Lower lobe of right lung (tissue), 2 donors: ENCODE measurements at regions of chr19 and their contacts with region 1.

Region 1: GRCh38 chr19:10644260-10645007 is 9.7 kb upstream of the ILF3 start:
- DNase-seq: peak; percentile 88
- ATAC-seq: peak; percentile 91 to 93
- H3K4me3 ChIP-seq: no peak overlapping the region
- H3K27ac ChIP-seq: peak overlapping the region; percentile 41
- H3K4me1 ChIP-seq: peaks cover 34% of the 10 kb centered on the region
- H3K27me3 ChIP-seq: no peaks in the 10 kb centered on the region
- CTCF ChIP-seq: peak; percentile 89

Region 2: GRCh38 chr19:10580979-10581631 is 63.3 kb before region 1 on chr19:
- intact Hi-C with region 1: loop called (anchors 10 kb)
- DNase-seq: peak; percentile 91
- ATAC-seq: peak; percentile 92 to 93
- H3K4me3 ChIP-seq: no peak overlapping the region
- H3K27ac ChIP-seq: no peak overlapping the region
- H3K4me1 ChIP-seq: peaks cover 4% of the 10 kb centered on the region
- H3K27me3 ChIP-seq: no peaks in the 10 kb centered on the region
- CTCF ChIP-seq: peak; percentile 97

Region 3: DNA sequence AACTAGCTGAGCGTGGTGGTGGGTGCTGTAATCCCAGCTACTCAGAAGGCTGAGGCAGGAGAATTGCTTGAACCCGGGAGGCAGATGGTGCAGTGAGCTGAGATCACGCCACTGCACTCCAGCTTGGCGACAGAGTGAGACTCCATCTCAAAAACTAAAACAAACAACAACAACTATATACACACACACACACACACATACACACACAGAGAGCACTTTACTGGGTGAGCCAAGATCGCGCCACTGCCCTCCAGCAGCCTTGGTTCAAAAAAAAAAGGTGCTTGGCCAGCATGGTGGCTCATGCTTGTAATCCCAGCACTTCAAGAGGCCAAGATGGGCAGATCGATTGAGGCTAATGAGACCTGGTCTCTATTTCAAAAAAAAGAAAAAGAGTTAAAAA is 47.4 kb before region 1 on chr19:
- intact Hi-C with region 1: no loop called
- DNase-seq: no peak
- ATAC-seq: no peak
- H3K4me3 ChIP-seq: peak overlapping the region; percentile 18
- H3K27ac ChIP-seq: peak overlapping the region; percentile 20
- H3K4me1 ChIP-seq: peaks cover 42% of the 10 kb centered on the region
- H3K27me3 ChIP-seq: no peaks in the 10 kb centered on the region
- CTCF ChIP-seq: no peak

Region 4: GRCh38 chr19:10812902-10813404 is 168.5 kb after region 1 on chr19:
- intact Hi-C with region 1: no loop called
- DNase-seq: no peak
- ATAC-seq: peak; percentile 45 to 51
- H3K4me3 ChIP-seq: no peak overlapping the region
- H3K27ac ChIP-seq: peak overlapping the region; percentile 18
- H3K4me1 ChIP-seq: peaks cover 16% of the 10 kb centered on the region
- H3K27me3 ChIP-seq: no peaks in the 10 kb centered on the region
- CTCF ChIP-seq: no peak